ENCODE measurements at regions of chr20 and their contacts with region 1.

Region 1: DNA sequence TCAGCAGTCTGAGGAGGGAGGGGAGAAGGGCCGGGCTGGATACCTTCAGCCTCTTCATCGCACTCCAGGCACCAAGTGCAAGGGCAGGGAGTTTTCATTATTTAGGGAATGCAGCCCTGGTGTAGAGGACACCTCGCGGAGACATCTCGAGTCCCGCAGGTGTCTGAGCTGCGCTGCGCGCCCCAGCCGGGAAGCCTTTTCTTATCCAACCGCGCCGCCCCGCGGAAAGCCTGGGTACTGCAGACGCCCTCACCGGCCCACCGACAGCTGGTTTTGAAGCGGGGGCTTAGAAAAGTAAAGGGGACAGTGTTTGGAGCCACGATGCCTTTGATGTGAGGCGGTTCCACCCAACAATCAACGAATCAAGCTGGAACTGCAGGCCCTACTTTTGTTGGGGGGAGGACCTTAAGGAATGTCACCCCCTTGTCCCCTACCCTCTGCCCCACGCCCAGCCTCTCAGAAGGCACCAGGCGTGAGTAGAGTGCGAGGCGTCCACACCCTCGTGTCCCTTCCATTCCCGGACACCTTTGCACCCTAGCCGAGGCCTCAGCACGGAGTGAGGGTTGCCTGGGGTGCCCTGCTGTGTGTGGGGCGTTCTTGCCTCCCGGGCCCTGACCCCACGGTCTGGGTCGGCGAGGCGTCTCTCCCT is 8.6 kb downstream of the NKX2-2 start:
- DNase-seq: peak; percentile 61 to 86 (median 83)
- ATAC-seq: peak; percentile 47 to 80
- H3K4me3 ChIP-seq: no peak overlapping the region
- H3K27ac ChIP-seq: no peak overlapping the region
- H3K4me1 ChIP-seq: no peaks in the 10 kb centered on the region
- H3K27me3 ChIP-seq: no peaks in the 10 kb centered on the region

Region 2: DNA sequence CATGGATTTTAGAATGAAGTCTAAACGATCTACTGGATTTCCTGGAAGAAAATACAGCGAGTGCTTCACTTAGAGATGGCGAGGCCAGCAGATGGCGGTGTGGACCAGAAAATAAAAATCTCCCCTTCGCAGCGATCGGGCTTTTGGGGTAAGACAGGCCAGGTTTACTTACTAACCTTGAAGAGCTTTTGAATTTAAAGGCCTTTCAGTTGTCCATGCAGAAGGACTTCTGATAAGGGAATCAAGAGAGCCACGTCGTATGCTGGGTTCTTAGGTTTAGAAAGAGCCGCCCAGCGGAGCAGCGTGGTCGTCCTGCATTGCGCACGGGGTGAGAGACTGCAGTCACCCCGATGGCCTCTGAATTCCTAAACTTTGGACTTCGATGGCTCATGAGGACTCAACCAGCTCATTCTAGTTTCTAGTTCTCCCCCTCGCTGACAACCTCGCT is 667.7 kb before region 1 on chr20:
- intact Hi-C with region 1: loop called in 1 of 4 experiments (anchors 10 kb)
- DNase-seq: peak; percentile 54 to 81 (median 72)
- ATAC-seq: peak; percentile 48 to 68
- H3K4me3 ChIP-seq: no peak overlapping the region
- H3K27ac ChIP-seq: no peak overlapping the region
- H3K4me1 ChIP-seq: no peaks in the 10 kb centered on the region
- H3K27me3 ChIP-seq: no peaks in the 10 kb centered on the region

Region 3: DNA sequence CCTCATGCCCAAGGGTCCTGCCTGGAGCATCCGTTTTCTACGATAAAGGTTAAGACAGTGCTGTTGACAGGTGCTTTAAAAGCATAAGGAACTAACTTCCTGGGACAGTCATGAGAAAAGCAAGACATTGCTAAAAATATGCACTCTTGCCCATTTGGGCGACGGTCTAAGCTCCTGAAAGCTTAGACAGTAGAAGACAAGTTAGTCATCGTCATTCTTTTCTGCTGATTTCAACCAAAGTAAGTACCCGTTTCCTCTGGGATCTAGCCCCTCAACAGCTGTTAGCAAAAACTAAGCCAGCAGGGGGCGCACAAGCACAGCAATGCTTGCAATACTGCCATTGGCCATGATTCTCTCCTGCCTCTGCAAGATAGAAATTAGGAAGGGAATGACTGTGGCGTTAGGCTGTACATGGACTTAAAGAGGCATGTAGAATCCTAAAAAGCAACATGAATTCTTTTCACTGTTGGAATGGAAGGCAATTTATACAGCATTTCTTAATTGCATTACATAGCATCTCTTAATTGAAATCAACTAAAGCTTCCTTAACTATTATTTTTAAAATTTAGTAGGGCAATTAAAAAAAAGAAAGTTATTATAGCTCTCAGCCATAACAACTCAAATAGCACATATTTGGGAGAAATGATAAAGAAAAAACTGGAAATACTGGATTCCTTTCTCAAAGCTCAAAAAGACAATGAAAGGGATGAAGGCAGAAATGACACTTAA is 645.0 kb before region 1 on chr20:
- intact Hi-C with region 1: loop called (anchors 5 to 10 kb)
- DNase-seq: peak; percentile 87 to 95 (median 91)
- ATAC-seq: peak; percentile 71 to 86
- H3K4me3 ChIP-seq: no peak overlapping the region
- H3K27ac ChIP-seq: no peak overlapping the region
- H3K4me1 ChIP-seq: no peaks in the 10 kb centered on the region
- H3K27me3 ChIP-seq: no peaks in the 10 kb centered on the region

Region 4: DNA sequence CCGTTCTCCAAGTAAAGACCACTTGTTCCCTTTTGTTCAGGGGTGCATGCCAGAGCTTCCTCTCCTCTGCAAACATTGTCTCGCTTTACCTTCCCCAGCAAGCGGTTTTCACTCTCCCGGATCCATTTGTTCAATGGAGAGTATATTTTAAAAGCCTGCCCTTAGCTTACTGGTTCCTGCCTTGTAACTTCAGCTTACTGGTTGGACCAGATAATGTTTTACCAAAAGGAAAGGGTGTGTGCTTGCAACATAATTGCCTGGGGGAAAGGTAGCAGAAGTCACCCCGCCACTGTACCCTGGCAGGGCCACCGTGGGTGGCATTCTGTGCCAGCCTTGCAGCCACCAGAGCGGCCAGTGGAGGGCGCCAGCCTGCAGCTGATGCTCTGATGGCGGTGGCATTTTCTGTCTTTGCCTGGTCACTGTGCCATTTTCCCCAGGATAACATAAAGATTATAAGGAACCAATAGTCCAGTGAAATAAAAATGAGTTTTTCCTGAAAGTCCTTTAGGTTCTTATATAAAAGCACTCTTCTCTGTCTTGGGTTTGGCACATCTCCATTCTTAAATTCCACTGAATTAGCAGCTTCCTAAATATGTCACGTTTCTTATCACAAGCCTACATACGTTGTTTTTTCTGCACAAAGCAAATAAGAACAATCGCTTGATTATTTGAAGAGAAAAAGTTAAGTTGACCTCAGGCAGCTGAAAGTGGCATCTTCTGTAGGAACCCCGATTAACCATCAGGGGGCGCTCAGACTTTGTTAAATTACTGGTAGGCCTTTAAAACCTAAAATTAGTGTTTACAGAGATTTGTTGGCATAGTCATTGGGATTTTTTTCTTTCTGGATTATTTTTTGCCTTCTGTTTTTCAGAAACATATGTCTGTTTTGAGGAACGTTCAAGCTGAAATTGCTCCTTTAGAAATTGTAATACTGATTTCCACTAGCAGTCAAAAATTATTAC is 269.5 kb before region 1 on chr20:
- intact Hi-C with region 1: loop called (anchors 2 to 5 kb)
- DNase-seq: peak; percentile 35 to 83 (median 79)
- ATAC-seq: peak; percentile 74
- H3K4me3 ChIP-seq: no peak overlapping the region
- H3K27ac ChIP-seq: no peak overlapping the region
- H3K4me1 ChIP-seq: no peaks in the 10 kb centered on the region
- H3K27me3 ChIP-seq: no peaks in the 10 kb centered on the region

Region 5: DNA sequence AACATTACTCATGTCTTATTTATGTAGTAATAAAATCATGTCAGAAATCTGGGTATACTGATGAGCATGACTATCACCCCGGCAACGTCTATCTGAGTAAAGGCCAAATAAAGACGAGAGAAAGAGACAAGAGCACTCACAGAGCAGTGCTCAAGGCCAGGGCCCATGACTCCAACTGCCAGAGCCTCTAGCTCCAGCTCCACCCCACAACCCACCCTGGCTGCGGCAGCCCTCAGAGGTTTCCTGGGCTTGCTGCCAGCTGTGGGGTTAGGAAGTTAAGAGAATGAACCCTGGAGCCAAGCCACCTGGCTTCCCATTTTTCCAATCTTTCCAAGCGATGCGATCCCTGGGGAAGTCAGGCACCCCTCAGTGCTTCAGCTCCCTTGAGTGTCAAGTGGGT is 108.2 kb after region 1 on chr20:
- intact Hi-C with region 1: no loop called
- DNase-seq: peak in 1 of 3 donors; percentile 20
- ATAC-seq: no peak
- H3K4me3 ChIP-seq: no peak overlapping the region
- H3K27ac ChIP-seq: no peak overlapping the region
- H3K4me1 ChIP-seq: no peaks in the 10 kb centered on the region
- H3K27me3 ChIP-seq: no peaks in the 10 kb centered on the region